Natural killer cell (primary cell): ENCODE measurements at regions of chr15 and their contacts with region 1.

Region 1: GRCh38 chr15:78299101-78299930 is at the start of gene SKIC8:
- DNase-seq: peak; percentile 89 to 96
- ATAC-seq: peak; percentile 97 to 98 (median 97)
- H3K4me3 ChIP-seq: peak within 1 kb of the TSS; percentile 67
- H3K4me3 Mint-ChIP-seq: peak within 1 kb of the TSS; percentile 98
- H3K27ac ChIP-seq: peak within 1 kb of the TSS; percentile 44
- H3K27ac Mint-ChIP-seq: peak within 1 kb of the TSS; percentile 89 to 97
- H3K4me1 ChIP-seq: peaks cover 14% of the 10 kb centered on the region
- H3K4me1 Mint-ChIP-seq: peaks cover 11 to 20% of the 10 kb centered on the region in 2 donors
- H3K27me3 ChIP-seq: no peaks in the 10 kb centered on the region
- H3K27me3 Mint-ChIP-seq: no peaks in the 10 kb centered on the region
- CTCF ChIP-seq: no peak
- total RNA-seq, gene SKIC8: 20.7 to 24.9 (median 21.4) TPM

Region 2: GRCh38 chr15:78149068-78149804 is 150.1 kb before region 1 on chr15 and contains the start of gene IDH3A:
- intact Hi-C with region 1: loop called (anchors 5 kb)
- DNase-seq: peak; percentile 99
- ATAC-seq: peak; percentile 98 to 100 (median 98)
- H3K4me3 ChIP-seq: peak within 1 kb of the TSS; percentile 66
- H3K4me3 Mint-ChIP-seq: peak within 1 kb of the TSS; percentile 94
- H3K27ac ChIP-seq: peak within 1 kb of the TSS; percentile 49
- H3K27ac Mint-ChIP-seq: peak within 1 kb of the TSS; percentile 91
- H3K4me1 ChIP-seq: peaks cover 17% of the 10 kb centered on the region
- H3K4me1 Mint-ChIP-seq: peaks cover 22 to 33% of the 10 kb centered on the region in 2 donors
- H3K27me3 ChIP-seq: no peaks in the 10 kb centered on the region
- H3K27me3 Mint-ChIP-seq: no peaks in the 10 kb centered on the region
- CTCF ChIP-seq: no peak
- total RNA-seq, gene IDH3A: 43.5 to 55.1 (median 53.3) TPM

Region 3: DNA sequence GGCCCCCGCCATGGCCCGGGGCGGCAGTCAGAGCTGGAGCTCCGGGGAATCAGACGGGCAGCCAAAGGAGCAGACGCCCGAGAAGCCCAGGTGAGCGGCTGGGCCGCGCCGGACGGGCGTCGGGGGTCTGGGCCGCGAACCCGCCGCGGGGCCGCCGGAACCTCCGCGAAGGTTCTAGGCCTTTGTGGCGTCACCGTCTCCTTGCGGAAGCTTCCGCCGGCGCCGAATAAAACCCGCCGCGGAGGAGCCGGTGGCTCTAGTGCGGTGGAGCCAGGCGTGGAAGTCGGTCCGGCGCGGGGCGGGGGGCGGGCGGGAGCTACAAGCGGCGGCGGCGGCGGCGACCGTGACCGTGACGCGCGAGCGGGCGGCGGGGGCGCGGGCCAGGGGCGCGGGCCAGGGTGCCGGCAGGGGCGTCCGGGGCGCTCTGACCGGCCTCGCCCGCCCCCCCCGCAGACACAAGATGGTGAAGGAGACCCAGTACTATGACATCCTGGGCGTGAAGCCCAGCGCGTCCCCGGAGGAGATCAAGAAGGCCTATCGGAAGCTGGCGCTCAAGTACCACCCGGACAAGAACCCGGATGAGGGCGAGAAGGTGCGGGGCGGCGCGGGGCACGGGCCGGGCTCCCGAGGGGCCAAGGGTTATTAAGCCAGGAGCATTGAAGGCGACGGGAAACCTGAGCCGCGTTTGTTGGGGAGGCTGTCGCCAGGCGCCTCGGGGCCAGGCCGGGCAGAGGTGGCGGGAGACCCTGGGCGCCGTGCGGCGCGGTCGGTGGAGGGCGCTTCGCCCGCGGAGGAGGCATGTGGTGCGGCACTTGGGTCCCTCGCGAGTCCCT is 34.8 kb before region 1 on chr15 and contains the start of gene DNAJA4:
- intact Hi-C with region 1: loop called (anchors 1 kb)
- DNase-seq: peak; percentile 54 to 80
- ATAC-seq: peak; percentile 77 to 83 (median 81)
- H3K4me3 ChIP-seq: peak within 1 kb of the TSS; percentile 54
- H3K4me3 Mint-ChIP-seq: peak within 1 kb of the TSS; percentile 87
- H3K27ac ChIP-seq: peak within 1 kb of the TSS; percentile 46
- H3K27ac Mint-ChIP-seq: peak within 1 kb of the TSS; percentile 78 to 82
- H3K4me1 ChIP-seq: peaks cover 10% of the 10 kb centered on the region
- H3K4me1 Mint-ChIP-seq: peaks cover 10 to 11% of the 10 kb centered on the region in 2 donors
- H3K27me3 ChIP-seq: no peaks in the 10 kb centered on the region
- H3K27me3 Mint-ChIP-seq: peaks cover 0 to 6% of the 10 kb centered on the region in 2 donors
- CTCF ChIP-seq: no peak
- total RNA-seq, gene DNAJA4: 23.2 to 28.8 (median 26.3) TPM

Region 4: GRCh38 chr15:78437762-78438302 is 138.5 kb after region 1 on chr15 and contains the start of gene IREB2:
- intact Hi-C with region 1: loop called (anchors 2 kb)
- DNase-seq: peak; percentile 97 to 100
- ATAC-seq: peak; percentile 91 to 96 (median 92)
- H3K4me3 ChIP-seq: peak within 1 kb of the TSS; percentile 95
- H3K4me3 Mint-ChIP-seq: peak within 1 kb of the TSS; percentile 79
- H3K27ac ChIP-seq: peak within 1 kb of the TSS; percentile 95
- H3K27ac Mint-ChIP-seq: peak within 1 kb of the TSS; percentile 83 to 85
- H3K4me1 ChIP-seq: peaks cover 17% of the 10 kb centered on the region
- H3K4me1 Mint-ChIP-seq: peaks cover 29 to 44% of the 10 kb centered on the region in 2 donors
- H3K27me3 ChIP-seq: no peaks in the 10 kb centered on the region
- H3K27me3 Mint-ChIP-seq: peaks cover 4 to 12% of the 10 kb centered on the region in 2 donors
- CTCF ChIP-seq: no peak
- total RNA-seq, gene IREB2: 84.9 to 121 (median 99.0) TPM